AG04449 (cell line): ENCODE measurements at regions of chr3 and their contacts with region 1.

Region 1: DNA sequence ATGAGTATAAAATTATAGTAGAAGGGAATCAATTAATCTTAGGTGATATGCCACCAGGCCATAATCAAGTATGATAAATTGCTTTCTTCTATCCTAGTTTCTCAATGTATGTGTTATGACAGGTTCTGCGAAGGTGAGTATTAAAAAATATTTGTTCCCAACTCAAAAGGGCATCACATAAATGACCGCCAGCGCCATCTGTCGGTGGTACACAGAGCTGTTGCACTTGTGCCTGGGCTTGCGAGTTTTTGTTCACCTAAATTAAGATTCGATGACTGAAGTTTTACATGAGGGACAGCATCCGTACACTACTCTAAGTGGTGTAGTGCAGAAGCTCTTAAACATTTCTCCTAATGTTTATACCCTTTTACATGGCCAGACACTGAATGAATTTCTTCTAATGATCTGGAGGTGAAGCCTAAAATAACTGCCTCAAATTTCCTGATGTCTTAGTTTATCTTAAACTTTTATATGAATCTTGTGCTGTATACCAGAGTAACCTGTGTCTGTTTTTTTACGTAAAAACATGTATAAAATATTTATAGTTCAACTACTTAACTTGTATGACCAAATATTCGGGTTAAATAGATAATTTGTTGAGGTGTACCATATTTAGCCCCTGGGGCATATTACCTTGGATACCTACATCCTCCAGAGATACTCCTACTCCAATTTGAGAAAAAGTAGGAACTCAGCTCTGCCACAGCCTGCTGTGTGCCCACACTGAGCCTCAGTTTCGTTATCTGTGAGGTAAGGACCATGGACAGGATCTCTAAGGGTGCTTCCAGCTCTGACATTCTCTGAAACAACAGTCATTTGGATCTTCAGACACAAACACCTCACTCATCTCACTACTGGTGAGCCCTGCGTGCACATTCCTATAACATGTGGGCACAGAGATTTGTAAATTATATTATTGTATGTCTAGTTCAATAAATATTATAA is 365.6 kb downstream of the MAGI1 start:
- DNase-seq: no peak
- H3K4me3 ChIP-seq: no peak overlapping the region
- CTCF ChIP-seq: peak; percentile 68

Region 2: GRCh38 chr3:65245133-65246063 is 427.7 kb before region 1 on chr3:
- CTCF ChIA-PET with region 1: no interaction called
- POLR2A ChIA-PET with region 1: no interaction called
- DNase-seq: no peak
- H3K4me3 ChIP-seq: no peak overlapping the region
- CTCF ChIP-seq: no peak

Region 3: DNA sequence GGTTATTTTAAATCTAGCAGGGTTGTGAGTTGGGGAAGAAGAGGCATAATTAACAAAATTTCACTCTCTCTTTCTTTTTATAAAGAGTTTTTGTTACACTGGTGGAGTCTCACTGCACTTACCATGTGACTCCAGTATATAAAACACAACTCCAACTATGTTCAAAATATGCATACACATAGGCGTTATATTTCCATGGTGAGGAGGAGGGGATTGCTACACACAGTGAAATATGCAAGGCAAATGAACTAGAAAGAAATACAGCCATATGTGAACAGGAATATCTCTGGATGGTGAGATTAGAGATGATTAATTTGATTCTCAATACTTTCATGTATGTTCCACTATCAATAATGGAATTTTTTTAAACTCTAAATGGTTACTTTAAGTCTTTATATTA is 19.4 kb before region 1 on chr3:
- CTCF ChIA-PET with region 1: interaction called, 10 read pairs
- POLR2A ChIA-PET with region 1: no interaction called
- DNase-seq: no peak
- H3K4me3 ChIP-seq: no peak overlapping the region
- CTCF ChIP-seq: no peak

Region 4: DNA sequence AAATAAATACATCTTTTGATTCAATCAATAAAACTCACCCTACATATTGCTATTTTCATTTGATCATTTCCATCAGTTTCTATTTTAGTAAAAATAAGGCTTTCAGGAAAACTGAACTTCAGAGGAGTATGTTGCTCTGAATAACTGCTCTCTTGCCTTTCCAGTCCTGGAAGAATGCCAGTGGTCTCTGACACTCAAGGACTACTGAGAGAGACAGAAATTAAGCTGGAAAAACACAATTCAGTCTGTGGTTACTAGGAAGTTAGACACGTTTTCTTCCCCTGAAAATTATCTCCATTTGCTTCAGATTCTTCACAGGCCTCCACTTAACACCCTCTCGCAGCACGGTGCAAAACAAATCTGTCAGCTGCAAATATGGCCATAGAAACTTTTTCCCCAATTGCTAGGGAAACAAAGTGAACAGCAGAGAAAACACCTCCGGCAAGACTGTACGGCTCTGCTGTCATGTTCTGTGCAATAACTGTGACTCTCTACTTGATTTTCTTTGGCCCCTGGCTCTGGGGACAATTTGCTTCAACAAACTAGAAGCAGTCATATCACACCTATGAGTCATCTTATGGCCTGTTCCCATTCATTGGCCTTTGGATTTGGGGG is 12.6 kb after region 1 on chr3:
- CTCF ChIA-PET with region 1: interaction called, 10 read pairs
- POLR2A ChIA-PET with region 1: no interaction called
- DNase-seq: peak; percentile 12
- H3K4me3 ChIP-seq: no peak overlapping the region
- CTCF ChIP-seq: no peak